ENCODE measurements at regions of chr22 and their contacts with region 1.

Region 1: DNA sequence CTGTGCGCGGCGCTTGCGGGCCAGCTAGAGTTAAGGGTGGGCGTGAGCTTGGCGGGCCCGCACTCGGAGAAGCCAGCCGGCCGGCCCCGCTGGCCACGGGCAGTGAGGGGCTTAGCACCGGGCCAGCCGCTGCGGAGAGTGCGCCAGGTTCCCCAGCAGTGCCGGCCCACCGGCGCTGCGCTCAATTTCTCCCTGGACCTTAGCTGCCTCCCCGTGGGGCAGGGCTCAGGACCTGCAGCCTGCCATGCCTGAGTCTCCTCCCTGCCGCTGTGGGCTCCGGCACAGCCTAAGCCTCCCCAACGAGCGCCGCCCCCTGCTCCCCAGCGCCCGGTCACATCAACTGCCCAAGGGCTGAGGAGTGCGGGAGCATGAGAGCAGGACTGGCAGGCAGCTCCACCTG is 5.2 kb upstream of the PES1 start:
- DNase-seq: no peak
- ATAC-seq: no peak
- H3K4me3 ChIP-seq: no peak overlapping the region
- H3K27ac ChIP-seq: no peak overlapping the region
- H3K4me1 ChIP-seq: no peaks in the 10 kb centered on the region
- H3K27me3 ChIP-seq: no peaks in the 10 kb centered on the region
- CTCF ChIP-seq: no peak

Region 2: GRCh38 chr22:30459181-30460052 is 137.5 kb before region 1 on chr22:
- CTCF ChIA-PET with region 1: no interaction called
- POLR2A ChIA-PET with region 1: no interaction called
- in situ Hi-C with region 1: no loop called
- intact Hi-C with region 1: no loop called
- DNase-seq: no peak
- ATAC-seq: no peak; the same call in 1 of the 2 replicates
- H3K4me3 ChIP-seq: no peak overlapping the region
- H3K27ac ChIP-seq: no peak overlapping the region
- H3K4me1 ChIP-seq: no peaks in the 10 kb centered on the region
- H3K27me3 ChIP-seq: no peaks in the 10 kb centered on the region
- CTCF ChIP-seq: no peak

Region 3: DNA sequence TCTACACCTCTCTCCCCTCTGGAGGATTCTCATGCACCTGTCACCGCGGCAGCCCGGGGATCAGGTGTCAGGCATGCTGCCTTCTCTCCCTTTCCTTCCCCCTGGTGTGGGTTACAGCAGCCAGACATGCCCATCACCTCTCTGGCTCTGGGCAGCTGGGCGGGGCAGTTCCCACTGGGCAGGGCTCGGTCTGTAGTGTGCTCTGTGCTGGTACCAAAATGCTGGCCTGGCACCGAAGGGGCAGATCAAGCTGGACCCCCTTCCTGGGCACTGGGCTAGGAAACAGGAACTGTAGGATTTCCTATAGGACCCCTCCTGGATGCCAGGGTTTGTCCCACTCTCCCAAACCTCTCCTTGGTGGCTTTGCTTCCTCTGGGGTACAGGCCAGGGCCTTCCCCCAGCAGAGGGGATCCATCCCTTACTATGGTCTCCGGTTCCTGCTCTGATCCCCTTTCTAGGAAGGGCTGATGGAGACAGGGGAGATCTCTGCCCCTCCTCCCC is 23.2 kb before region 1 on chr22:
- CTCF ChIA-PET with region 1: no interaction called
- POLR2A ChIA-PET with region 1: no interaction called
- in situ Hi-C with region 1: no loop called
- intact Hi-C with region 1: no loop called
- DNase-seq: no peak
- ATAC-seq: peak; percentile 45; the same call in 1 of the 2 replicates
- H3K4me3 ChIP-seq: no peak overlapping the region
- H3K27ac ChIP-seq: no peak overlapping the region
- H3K4me1 ChIP-seq: peaks cover 11% of the 10 kb centered on the region
- H3K27me3 ChIP-seq: no peaks in the 10 kb centered on the region
- CTCF ChIP-seq: no peak

Region 4: GRCh38 chr22:30615543-30615954 is 18.7 kb after region 1 on chr22:
- CTCF ChIA-PET with region 1: interaction called, 13 read pairs
- POLR2A ChIA-PET with region 1: no interaction called
- in situ Hi-C with region 1: no loop called
- intact Hi-C with region 1: no loop called
- DNase-seq: no peak
- ATAC-seq: no peak
- H3K4me3 ChIP-seq: no peak overlapping the region
- H3K27ac ChIP-seq: no peak overlapping the region
- H3K4me1 ChIP-seq: no peaks in the 10 kb centered on the region
- H3K27me3 ChIP-seq: no peaks in the 10 kb centered on the region
- CTCF ChIP-seq: no peak

Region 5: GRCh38 chr22:30931541-30932300 is 334.8 kb after region 1 on chr22:
- CTCF ChIA-PET with region 1: no interaction called
- POLR2A ChIA-PET with region 1: no interaction called
- in situ Hi-C with region 1: no loop called
- intact Hi-C with region 1: no loop called
- DNase-seq: no peak
- ATAC-seq: no peak
- H3K4me3 ChIP-seq: no peak overlapping the region
- H3K27ac ChIP-seq: no peak overlapping the region
- H3K4me1 ChIP-seq: no peaks in the 10 kb centered on the region
- H3K27me3 ChIP-seq: no peaks in the 10 kb centered on the region
- CTCF ChIP-seq: no peak

Measured in Panc1 (cell line).